ENCODE measurements at regions of chr7 and their contacts with region 1.

Region 1: DNA sequence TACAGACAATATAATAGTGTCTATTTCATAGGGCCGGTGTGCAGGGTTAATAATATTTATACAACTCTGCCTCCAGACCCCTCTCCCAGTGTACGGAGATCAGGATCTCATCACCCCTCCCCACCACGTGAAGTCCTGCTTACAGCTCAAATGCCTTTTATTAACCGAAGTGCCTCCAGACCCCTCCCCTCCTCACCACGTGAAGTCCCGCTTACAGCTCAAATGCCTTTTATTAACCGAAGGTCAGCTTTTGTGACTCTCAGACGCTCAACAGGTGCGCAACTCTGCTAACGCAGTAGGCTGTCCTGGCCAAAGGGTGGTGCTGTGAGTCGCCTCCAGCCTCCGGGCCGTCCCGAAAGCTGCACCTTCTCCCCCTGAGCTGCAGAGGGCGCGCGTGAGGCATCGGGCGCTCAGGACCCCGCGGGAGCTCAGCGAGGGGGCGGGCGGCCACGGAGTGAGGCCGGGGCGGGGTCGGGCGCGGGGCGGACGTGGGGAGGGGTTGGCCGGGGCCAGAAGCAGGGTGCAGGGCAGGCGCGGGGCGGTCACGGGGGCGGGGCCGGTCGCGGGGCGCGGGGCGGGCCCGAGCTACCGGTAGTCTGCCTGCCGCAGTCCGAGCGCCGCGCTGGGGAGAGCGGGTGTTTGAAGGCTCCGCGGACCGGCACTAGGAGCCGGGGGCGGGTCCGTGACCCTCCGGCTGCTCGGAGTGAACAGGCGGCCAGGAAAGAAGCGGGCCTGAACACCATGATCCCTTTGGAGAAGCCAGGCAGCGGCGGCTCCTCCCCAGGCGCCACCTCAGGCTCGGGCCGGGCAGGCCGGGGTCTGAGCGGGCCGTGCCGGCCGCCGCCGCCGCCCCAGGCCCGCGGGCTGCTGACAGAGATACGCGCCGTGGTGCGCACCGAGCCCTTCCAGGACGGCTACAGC is at the start of gene STK17A:
- DNase-seq: peak; percentile 95
- H3K4me3 Mint-ChIP-seq: peak within 1 kb of the TSS; percentile 86
- H3K27ac Mint-ChIP-seq: peak within 1 kb of the TSS; percentile 93
- H3K4me1 Mint-ChIP-seq: peaks cover 20% of the 10 kb centered on the region
- H3K27me3 Mint-ChIP-seq: peaks cover 7% of the 10 kb centered on the region
- total RNA-seq, gene STK17A: 48.9 to 52.8 TPM

Region 2: DNA sequence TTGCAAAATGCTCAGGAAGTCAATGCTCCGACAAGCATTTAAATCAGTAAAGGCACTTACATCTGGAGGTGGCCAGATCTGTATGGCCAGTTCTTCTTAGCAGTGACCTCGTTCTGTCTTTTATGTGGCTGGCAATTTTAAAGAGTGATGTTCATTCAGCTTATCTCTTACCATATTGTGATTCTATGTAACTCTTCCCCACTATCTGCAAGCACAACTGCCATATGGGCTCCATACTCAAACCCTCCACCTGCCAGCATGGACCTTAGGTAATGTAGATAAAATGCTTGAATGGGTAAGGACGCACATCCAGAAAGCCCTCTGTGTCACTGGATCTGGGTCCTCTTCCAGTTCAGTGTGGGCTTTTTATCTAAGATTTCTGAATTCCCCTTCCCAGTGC is 42.3 kb before region 1 on chr7:
- CTCF ChIA-PET with region 1: no interaction called
- intact Hi-C with region 1: no loop called
- DNase-seq: no peak
- H3K4me3 Mint-ChIP-seq: no peak overlapping the region
- H3K27ac Mint-ChIP-seq: no peak overlapping the region
- H3K4me1 Mint-ChIP-seq: no peaks in the 10 kb centered on the region
- H3K27me3 Mint-ChIP-seq: no peaks in the 10 kb centered on the region

Region 3: DNA sequence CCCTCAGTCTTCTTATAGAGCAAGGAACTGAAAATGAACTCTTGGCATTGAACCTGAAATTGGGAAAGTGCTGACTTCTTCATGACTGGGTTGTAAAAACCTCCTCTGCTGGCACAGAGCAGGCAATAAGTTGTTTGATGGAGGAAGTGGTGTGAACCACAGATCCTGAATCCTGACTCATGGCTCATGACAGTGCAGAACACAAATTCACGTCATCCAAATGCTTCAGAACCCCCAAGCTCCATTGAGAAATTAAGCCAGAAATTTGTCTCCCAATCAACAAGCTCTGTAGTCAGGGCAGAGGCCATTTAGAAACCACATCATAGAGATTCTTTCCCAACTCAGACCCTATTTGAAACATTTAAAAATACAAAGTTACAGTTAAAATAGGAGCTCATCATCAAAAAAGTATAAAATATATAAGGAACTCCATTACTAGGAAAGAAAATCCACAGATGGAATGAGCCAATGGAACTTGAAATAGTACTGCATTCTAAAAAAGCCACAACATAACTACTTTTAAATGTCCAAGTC is 10.2 kb before region 1 on chr7:
- CTCF ChIA-PET with region 1: interaction called, 51 read pairs
- intact Hi-C with region 1: no loop called
- DNase-seq: peak; percentile 67
- H3K4me3 Mint-ChIP-seq: no peak overlapping the region
- H3K27ac Mint-ChIP-seq: no peak overlapping the region
- H3K4me1 Mint-ChIP-seq: peaks cover 22% of the 10 kb centered on the region
- H3K27me3 Mint-ChIP-seq: no peaks in the 10 kb centered on the region

Region 4: DNA sequence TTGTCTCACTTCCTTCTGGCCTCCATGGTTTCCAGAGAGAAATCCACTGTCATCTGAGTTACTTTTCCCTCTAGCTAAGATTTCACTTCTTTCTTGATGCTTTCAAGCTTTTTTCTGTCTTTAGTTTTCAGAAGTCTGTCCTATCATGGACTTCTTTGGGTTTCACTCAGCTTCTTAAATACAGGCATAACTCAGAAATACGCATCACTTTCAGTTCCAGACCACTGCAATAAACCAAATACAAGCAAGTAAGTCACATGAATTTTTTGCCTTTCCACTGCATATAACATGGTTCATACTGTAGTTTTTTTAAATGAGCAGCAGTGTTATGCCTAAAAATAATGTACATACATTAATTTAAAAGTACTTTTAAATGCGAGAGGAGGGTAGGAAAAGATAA is 48.8 kb after region 1 on chr7:
- CTCF ChIA-PET with region 1: interaction called, 48 read pairs
- intact Hi-C with region 1: no loop called
- DNase-seq: no peak
- H3K4me3 Mint-ChIP-seq: no peak overlapping the region
- H3K27ac Mint-ChIP-seq: peak overlapping the region; percentile 74
- H3K4me1 Mint-ChIP-seq: peaks cover 84% of the 10 kb centered on the region
- H3K27me3 Mint-ChIP-seq: no peaks in the 10 kb centered on the region

Region 5: GRCh38 chr7:43674584-43675436 is 92.0 kb after region 1 on chr7:
- CTCF ChIA-PET with region 1: interaction called, 14 read pairs
- intact Hi-C with region 1: no loop called
- DNase-seq: no peak
- H3K4me3 Mint-ChIP-seq: no peak overlapping the region
- H3K27ac Mint-ChIP-seq: peak overlapping the region; percentile 30
- H3K4me1 Mint-ChIP-seq: peaks cover 85% of the 10 kb centered on the region
- H3K27me3 Mint-ChIP-seq: no peaks in the 10 kb centered on the region

Region 6: GRCh38 chr7:43711503-43711902 is 128.7 kb after region 1 on chr7:
- CTCF ChIA-PET with region 1: interaction called, 64 read pairs
- intact Hi-C with region 1: no loop called
- DNase-seq: no peak
- H3K4me3 Mint-ChIP-seq: no peak overlapping the region
- H3K27ac Mint-ChIP-seq: no peak overlapping the region
- H3K4me1 Mint-ChIP-seq: peaks cover 27% of the 10 kb centered on the region
- H3K27me3 Mint-ChIP-seq: no peaks in the 10 kb centered on the region

Region 7: GRCh38 chr7:43758029-43758821 is 175.5 kb after region 1 on chr7 and contains the start of gene BLVRA:
- CTCF ChIA-PET with region 1: interaction called, 14 read pairs
- intact Hi-C with region 1: no loop called
- DNase-seq: peak; percentile 66
- H3K4me3 Mint-ChIP-seq: peak within 1 kb of the TSS; percentile 71
- H3K27ac Mint-ChIP-seq: no peak within 1 kb of the TSS
- H3K4me1 Mint-ChIP-seq: peaks cover 43% of the 10 kb centered on the region
- H3K27me3 Mint-ChIP-seq: no peaks in the 10 kb centered on the region
- total RNA-seq, gene BLVRA: 26.6 to 28.9 TPM

Region 8: DNA sequence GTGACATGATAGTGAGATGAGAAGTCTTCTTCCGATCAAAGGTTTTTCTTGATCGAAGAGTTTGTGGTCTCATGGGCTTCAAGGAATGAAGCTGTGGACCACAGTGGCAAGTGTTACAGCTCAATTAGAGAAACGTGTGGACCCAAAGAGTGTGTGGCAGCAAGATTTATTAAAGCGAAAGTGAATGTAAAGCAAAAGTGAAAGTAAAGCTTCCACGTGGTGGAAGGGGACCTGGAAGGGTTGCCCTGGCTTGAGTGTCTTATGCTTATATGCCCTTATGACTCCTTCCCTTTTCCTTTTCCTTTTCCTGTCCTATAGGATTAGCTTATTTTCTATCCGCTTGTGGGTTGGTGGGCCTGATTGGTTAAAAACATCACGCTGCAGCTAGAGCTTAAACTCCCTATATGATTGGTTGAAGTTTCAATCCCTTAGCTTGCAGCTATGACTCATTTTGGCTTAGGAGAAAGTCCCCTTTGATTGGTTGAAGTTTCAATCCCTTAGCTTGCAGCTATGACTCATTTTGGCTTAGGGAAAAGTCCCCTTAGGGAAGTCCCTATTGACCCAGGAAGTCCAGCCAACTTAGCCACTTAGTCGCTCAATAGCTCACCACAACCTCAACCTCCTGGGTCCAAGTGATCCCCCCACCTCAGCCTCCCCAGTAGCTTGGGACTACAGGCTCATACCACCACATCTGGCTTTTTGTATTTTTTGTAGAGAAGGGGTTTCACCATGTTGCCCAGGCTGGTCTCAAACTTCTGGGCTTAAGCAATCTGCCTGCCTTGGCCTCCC is 251.9 kb after region 1 on chr7:
- CTCF ChIA-PET with region 1: interaction called, 131 read pairs
- intact Hi-C with region 1: loop called (anchors 1 kb)
- DNase-seq: peak; percentile 55
- H3K4me3 Mint-ChIP-seq: peak overlapping the region; percentile 64
- H3K27ac Mint-ChIP-seq: peak overlapping the region; percentile 76
- H3K4me1 Mint-ChIP-seq: peaks cover 34% of the 10 kb centered on the region
- H3K27me3 Mint-ChIP-seq: no peaks in the 10 kb centered on the region

Measured in activated naive CD4-positive, alpha-beta T cell treated with anti-CD3 and anti-CD28 coated beads for 36 hours (primary cell).